Heart left ventricle (tissue), 16 donors: ENCODE measurements at regions of chr20 and their contacts with region 1.

Region 1: GRCh38 chr20:44074252-44075151 is 112.5 kb downstream of the JPH2 start:
- DNase-seq: peak; percentile 41 to 88 (median 77)
- ATAC-seq: peak; percentile 88 to 94 (median 92)
- H3K4me3 ChIP-seq: no peak overlapping the region
- H3K27ac ChIP-seq: peak overlapping the region in 10 of 12 donors; percentile 6 to 62 (median 48)
- H3K4me1 ChIP-seq: peaks cover 0 to 25% (median 1%) of the 10 kb centered on the region in 12 donors
- H3K27me3 ChIP-seq: peaks cover 0 to 7% (median 0%) of the 10 kb centered on the region in 9 donors
- CTCF ChIP-seq: no peak
- POLR2A ChIP-seq: no peak

Region 2: GRCh38 chr20:43448748-43449535 is 625.6 kb before region 1 on chr20:
- intact Hi-C with region 1: loop called in 1 of 10 experiments (anchors 5 kb)
- DNase-seq: no peak
- ATAC-seq: peak; percentile 15 to 67 (median 65)
- H3K4me3 ChIP-seq: no peak overlapping the region
- H3K27ac ChIP-seq: no peak overlapping the region
- H3K4me1 ChIP-seq: peaks cover 0 to 10% (median 0%) of the 10 kb centered on the region in 12 donors
- H3K27me3 ChIP-seq: peaks cover 0 to 10% (median 2%) of the 10 kb centered on the region in 9 donors
- CTCF ChIP-seq: peak; percentile 47 to 68 (median 58)
- POLR2A ChIP-seq: no peak

Region 3: GRCh38 chr20:43631598-43631997 is 442.9 kb before region 1 on chr20:
- intact Hi-C with region 1: no loop called
- DNase-seq: peak in 2 of 5 donors; percentile 10 to 27
- ATAC-seq: peak; percentile 68 to 87 (median 77)
- H3K4me3 ChIP-seq: no peak overlapping the region
- H3K27ac ChIP-seq: no peak overlapping the region
- H3K4me1 ChIP-seq: peaks cover 0 to 5% (median 0%) of the 10 kb centered on the region in 12 donors
- H3K27me3 ChIP-seq: no peaks in the 10 kb centered on the region
- CTCF ChIP-seq: no peak
- POLR2A ChIP-seq: no peak

Region 4: DNA sequence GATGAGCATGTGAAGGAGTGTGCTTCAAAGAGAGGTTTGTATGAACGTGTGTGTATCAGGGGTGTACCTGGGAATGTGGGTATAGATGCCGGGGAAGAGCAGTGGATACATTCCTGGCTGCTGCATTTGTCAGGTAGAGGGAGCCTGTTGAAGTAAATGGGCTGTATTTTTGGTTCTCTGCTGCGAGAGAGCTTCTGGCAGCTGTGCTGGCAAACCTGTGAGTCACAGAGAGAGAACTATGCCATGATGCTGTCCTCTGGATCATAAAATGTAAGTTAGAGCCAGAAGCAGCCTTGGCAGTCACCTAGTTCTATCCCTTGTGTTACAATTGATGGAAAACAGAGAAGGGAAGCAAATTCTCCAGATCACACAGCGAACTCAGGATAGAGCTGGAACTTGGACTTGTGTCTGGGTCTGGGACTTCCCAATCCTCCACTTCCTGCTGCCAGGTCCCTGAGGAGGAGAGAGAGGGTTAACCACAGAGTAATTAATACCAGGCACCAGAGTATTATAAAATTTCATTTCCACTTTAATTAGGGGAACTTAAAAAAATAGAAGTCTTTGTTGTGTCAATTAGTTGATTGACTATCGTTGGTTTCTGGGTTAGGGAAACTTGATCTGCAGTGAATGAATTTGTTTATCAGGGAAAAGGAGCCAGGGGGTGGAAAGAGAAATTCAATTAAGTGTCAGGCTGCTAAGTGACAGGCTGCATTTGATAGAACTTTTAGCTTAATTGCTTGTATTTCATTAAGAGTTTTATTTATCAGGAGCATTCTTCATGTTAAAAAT is 306.6 kb before region 1 on chr20:
- intact Hi-C with region 1: loop called in 2 of 10 experiments (anchors 5 kb)
- DNase-seq: peak in 1 of 5 donors; percentile 37
- ATAC-seq: peak; percentile 40 to 67 (median 64)
- H3K4me3 ChIP-seq: no peak overlapping the region
- H3K27ac ChIP-seq: no peak overlapping the region
- H3K4me1 ChIP-seq: peaks cover 0 to 18% (median 0%) of the 10 kb centered on the region in 12 donors
- H3K27me3 ChIP-seq: peaks cover 0 to 20% (median 2%) of the 10 kb centered on the region in 9 donors
- CTCF ChIP-seq: no peak
- POLR2A ChIP-seq: no peak

Region 5: DNA sequence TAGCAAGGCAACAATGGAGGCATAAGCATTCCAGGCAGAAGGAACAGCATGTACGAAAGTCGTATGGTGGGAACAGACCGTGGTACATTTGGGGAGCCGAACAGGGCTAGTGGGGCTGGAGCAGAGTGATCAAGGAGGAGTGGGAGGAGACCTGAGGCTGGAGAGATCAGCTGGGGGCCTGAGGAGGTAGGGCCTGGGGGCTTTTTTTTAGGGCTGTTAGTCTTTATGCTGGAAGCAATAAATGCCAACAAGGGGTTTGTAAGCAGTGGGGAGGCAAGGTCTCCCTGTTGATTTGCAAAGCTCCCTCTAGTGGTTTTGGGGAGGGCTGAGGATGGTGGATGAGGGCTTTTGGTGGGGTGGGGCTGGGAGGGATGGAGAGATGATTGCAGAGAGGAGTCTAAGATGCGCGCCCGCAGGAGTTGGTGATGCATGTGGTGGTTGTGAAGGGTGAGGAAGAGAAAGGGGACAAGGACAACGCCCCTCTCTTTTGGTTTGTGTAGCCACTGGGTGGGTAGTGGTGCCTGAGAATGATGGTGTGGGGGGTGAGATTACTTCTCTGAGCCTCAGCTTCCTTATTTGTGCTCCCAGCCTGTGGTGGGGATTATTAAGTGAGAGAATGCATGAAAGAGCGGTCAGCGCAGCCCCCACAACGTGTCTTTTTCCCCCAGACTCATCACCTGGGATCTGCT is 234.0 kb before region 1 on chr20:
- intact Hi-C with region 1: loop called in 2 of 10 experiments (anchors 2 to 5 kb)
- DNase-seq: no peak
- ATAC-seq: no peak
- H3K4me3 ChIP-seq: no peak overlapping the region
- H3K27ac ChIP-seq: no peak overlapping the region
- H3K4me1 ChIP-seq: peaks cover 0 to 9% (median 0%) of the 10 kb centered on the region in 12 donors
- H3K27me3 ChIP-seq: peaks cover 0 to 9% (median 0%) of the 10 kb centered on the region in 9 donors
- CTCF ChIP-seq: peak in 9 of 12 donors; percentile 17 to 32 (median 19)
- POLR2A ChIP-seq: no peak

Region 6: GRCh38 chr20:44129911-44130718 is 55.6 kb after region 1 on chr20:
- intact Hi-C with region 1: no loop called
- DNase-seq: peak in 1 of 5 donors; percentile 14
- ATAC-seq: peak; percentile 14 to 45 (median 23)
- H3K4me3 ChIP-seq: no peak overlapping the region
- H3K27ac ChIP-seq: peak overlapping the region in 3 of 12 donors; percentile 22 to 80 (median 48)
- H3K4me1 ChIP-seq: peaks cover 0 to 31% (median 5%) of the 10 kb centered on the region in 12 donors
- H3K27me3 ChIP-seq: no peaks in the 10 kb centered on the region
- CTCF ChIP-seq: no peak
- POLR2A ChIP-seq: no peak